H1 (cell line): ENCODE measurements at regions of chr17 and their contacts with region 1.

Region 1: DNA sequence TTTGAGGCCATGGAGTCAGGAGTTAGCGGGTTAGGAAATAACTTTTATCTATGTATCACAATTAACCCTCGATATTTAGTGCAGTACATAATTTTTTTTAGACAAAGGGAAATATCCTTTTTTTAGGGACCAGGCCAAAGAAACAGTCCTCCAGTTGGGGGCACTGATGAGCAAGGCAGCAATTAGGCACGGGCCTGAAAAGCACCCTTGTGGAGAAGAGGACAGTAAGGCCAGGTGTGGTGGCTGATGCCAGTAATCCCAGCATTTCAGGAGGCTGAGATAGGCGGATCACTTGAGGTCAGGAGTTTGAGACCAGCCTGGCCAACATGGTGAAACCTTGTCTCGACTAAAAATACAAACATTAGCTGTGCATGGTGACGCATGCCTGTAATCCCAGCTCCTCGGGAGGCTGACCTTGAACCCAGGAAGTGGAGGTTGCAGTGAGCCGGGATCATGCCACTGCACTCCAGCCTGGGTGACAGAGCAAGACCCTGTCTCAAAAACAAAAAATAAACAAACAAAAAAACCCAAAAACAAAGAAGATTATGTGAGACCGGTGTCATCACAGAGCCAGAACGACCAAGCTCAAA is 158.3 kb upstream of the NOL11 start:
- DNase-seq: peak in 1 of 2 experiments; percentile 61
- H3K4me3 ChIP-seq: no peak overlapping the region
- H3K27ac ChIP-seq: no peak overlapping the region
- H3K4me1 ChIP-seq: no peaks in the 10 kb centered on the region; a peak in 1 of 7 replicates
- H3K27me3 ChIP-seq: no peaks in the 10 kb centered on the region
- CTCF ChIP-seq: peak; percentile 56 to 81 (median 70)
- EP300 ChIP-seq: no peak
- POLR2A ChIP-seq: no peak
- RAD21 ChIP-seq: peak; percentile 60 to 72

Region 2: DNA sequence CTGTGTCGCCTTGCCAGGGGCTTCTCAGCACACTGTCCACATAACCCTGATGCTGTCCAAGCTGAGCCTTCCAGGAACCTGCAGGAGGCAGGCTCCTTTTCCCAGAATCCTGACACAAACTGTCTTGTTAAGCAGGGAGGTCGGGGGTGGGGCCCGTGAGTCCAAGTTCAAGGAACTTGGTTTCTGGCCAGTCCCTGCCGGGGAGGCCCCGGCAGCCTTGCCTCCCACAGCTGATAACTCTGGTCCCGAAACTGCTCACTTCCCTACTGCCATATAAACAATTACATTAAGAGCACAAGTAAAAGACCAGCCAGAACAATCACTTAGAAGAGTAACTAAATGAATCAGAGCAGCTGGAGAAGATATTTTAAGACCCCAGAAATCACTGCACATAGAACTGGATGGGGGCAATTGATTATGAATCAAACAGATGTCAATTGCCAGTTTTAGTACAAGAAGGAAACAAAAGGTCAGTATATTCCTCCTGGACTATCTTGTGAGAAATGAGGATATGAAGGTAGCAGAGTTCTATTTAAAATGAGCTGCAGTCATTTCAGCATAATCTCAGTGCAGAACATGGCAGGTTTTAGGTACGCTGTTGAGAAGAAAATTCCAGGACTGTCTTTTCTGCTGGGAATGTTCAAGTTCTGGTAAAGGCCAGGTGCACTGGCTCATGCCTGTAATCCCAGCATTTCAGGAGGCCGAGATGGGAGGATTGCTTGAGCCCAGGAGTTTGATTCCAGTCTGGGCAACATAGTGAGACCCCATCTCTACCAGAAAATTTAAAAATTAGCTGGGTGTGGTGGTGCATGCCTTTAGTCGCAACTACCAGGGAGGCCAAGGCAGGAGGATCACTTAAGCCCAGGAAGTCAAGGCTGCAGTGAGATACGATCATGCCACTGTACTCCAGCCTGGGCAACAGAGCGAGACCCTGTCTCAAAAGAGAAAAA is 12.6 kb before region 1 on chr17:
- CTCF ChIA-PET with region 1: interaction called, 13 read pairs
- POLR2A ChIA-PET with region 1: interaction called, 3 read pairs
- DNase-seq: no peak
- H3K4me3 ChIP-seq: no peak overlapping the region
- H3K27ac ChIP-seq: no peak overlapping the region
- H3K4me1 ChIP-seq: peaks cover 0 to 3% (median 1%) of the 10 kb centered on the region in 4 experiments; a peak in 2 of 7 replicates
- H3K27me3 ChIP-seq: no peaks in the 10 kb centered on the region
- CTCF ChIP-seq: no peak
- EP300 ChIP-seq: no peak
- POLR2A ChIP-seq: no peak
- RAD21 ChIP-seq: no peak; a peak in 1 of 4 replicates

Region 3: GRCh38 chr17:67575325-67575724 is 15.9 kb after region 1 on chr17:
- CTCF ChIA-PET with region 1: interaction called, 15 read pairs
- POLR2A ChIA-PET with region 1: no interaction called
- DNase-seq: no peak
- H3K4me3 ChIP-seq: no peak overlapping the region
- H3K27ac ChIP-seq: no peak overlapping the region
- H3K4me1 ChIP-seq: peaks cover 0 to 6% (median 2%) of the 10 kb centered on the region in 4 experiments; a peak in 1 of 7 replicates
- H3K27me3 ChIP-seq: no peaks in the 10 kb centered on the region
- CTCF ChIP-seq: no peak
- EP300 ChIP-seq: no peak
- POLR2A ChIP-seq: no peak
- RAD21 ChIP-seq: no peak

Region 4: GRCh38 chr17:67594115-67594880 is 34.8 kb after region 1 on chr17:
- CTCF ChIA-PET with region 1: interaction called, 10 read pairs
- POLR2A ChIA-PET with region 1: no interaction called
- DNase-seq: no peak
- H3K4me3 ChIP-seq: no peak overlapping the region
- H3K27ac ChIP-seq: no peak overlapping the region
- H3K4me1 ChIP-seq: no peaks in the 10 kb centered on the region
- H3K27me3 ChIP-seq: no peaks in the 10 kb centered on the region
- CTCF ChIP-seq: no peak
- EP300 ChIP-seq: no peak
- POLR2A ChIP-seq: no peak
- RAD21 ChIP-seq: no peak

Region 5: DNA sequence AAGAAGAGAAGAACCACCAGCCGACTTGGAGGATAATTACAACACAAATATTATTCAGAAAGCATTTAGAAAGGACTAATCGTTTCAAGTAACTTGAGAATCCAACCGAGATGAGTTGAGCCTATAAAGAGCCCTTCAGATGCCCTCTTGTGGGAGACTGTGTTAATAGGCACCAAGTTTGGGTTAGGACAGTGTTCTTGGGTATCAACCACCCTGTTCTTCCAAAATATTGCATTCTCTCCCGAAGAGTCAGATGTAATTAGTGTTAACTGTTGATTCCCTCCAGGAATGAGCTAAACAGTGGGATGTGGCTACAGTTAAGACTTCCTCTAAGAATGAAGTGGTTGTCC is 70.5 kb after region 1 on chr17:
- CTCF ChIA-PET with region 1: interaction called, 14 read pairs
- POLR2A ChIA-PET with region 1: no interaction called
- DNase-seq: no peak
- H3K4me3 ChIP-seq: no peak overlapping the region
- H3K27ac ChIP-seq: no peak overlapping the region
- H3K4me1 ChIP-seq: no peaks in the 10 kb centered on the region
- H3K27me3 ChIP-seq: no peaks in the 10 kb centered on the region
- CTCF ChIP-seq: peak in 2 of 3 experiments; percentile 42 to 43; a peak in 2 of 4 replicates
- EP300 ChIP-seq: no peak
- POLR2A ChIP-seq: no peak
- RAD21 ChIP-seq: peak; percentile 44 to 57